ENCODE measurements at regions of chr2 and their contacts with region 1.

Region 1: GRCh38 chr2:24827321-24828237 is 34.4 kb downstream of the CENPO start:
- DNase-seq: peak; percentile 49 to 64
- H3K4me3 ChIP-seq: no peak overlapping the region
- H3K27ac ChIP-seq: no peak overlapping the region
- H3K4me1 ChIP-seq: no peaks in the 10 kb centered on the region
- H3K27me3 ChIP-seq: no peaks in the 10 kb centered on the region
- CTCF ChIP-seq: peak; percentile 92

Region 2: DNA sequence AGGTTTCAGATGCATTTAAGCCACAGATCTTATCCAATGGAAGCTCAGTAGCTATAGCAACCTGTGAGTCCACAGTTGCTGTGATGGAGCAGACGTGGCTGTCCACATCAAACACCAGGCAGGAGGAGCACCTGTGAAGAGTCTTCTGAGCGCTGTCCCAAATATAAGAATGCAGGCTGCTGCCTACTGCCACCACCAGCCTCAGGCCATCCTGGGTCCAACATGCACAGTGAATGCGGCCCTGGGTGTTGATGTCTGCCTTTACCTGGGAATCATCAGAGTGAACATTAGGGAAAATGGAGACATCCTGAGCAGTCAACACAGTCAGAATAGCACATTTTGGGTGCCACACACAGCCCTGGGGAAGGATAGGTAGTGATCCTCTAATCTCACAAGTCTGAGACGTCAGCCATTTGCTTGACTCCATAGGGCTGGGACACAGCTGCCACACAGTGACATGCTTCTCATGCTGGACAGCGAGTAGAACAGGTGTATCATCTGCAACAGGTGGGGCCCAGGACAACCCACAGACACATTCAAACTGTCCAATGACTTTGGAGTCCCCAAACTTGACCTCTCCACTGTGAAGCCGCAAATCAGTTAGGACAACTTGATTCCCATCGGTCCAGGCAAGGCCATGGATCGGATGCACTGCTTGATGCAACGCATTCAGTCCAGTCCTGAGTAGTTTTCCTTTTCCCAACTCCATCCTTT is 788.6 kb before region 1 on chr2:
- CTCF ChIA-PET with region 1: interaction called, 10 read pairs
- POLR2A ChIA-PET with region 1: no interaction called
- intact Hi-C with region 1: no loop called
- DNase-seq: no peak
- H3K4me3 ChIP-seq: no peak overlapping the region
- H3K27ac ChIP-seq: no peak overlapping the region
- H3K4me1 ChIP-seq: no peaks in the 10 kb centered on the region
- H3K27me3 ChIP-seq: no peaks in the 10 kb centered on the region
- CTCF ChIP-seq: no peak

Region 3: DNA sequence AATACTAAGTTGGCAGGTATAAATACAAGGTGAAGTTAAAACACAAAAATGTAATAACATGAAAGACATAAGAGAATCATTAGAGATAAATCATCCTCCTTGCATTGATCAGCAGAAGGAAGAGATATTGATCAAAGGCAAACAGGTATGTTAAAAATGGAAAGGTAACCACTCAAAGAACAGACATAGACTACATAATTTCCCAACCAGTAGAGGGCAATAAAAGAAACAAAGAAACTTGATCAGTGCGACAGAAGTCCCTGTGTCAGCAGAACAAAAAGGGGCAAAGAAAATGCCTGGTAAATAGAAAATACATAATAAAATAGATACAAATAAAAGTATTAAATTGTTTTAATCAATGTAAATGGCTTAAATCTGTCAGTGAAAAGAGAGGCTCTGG is 599.1 kb before region 1 on chr2:
- CTCF ChIA-PET with region 1: no interaction called
- POLR2A ChIA-PET with region 1: no interaction called
- intact Hi-C with region 1: loop called (anchors 5 kb)
- DNase-seq: peak in 1 of 2 experiments; percentile 40
- H3K4me3 ChIP-seq: no peak overlapping the region
- H3K27ac ChIP-seq: no peak overlapping the region
- H3K4me1 ChIP-seq: no peaks in the 10 kb centered on the region
- H3K27me3 ChIP-seq: no peaks in the 10 kb centered on the region
- CTCF ChIP-seq: peak; percentile 62

Region 4: GRCh38 chr2:24409700-24410556 is 417.7 kb before region 1 on chr2:
- CTCF ChIA-PET with region 1: interaction called, 7 read pairs
- POLR2A ChIA-PET with region 1: no interaction called
- intact Hi-C with region 1: loop called (anchors 1 kb)
- DNase-seq: peak; percentile 38 to 58
- H3K4me3 ChIP-seq: no peak overlapping the region
- H3K27ac ChIP-seq: no peak overlapping the region
- H3K4me1 ChIP-seq: peaks cover 11% of the 10 kb centered on the region
- H3K27me3 ChIP-seq: no peaks in the 10 kb centered on the region
- CTCF ChIP-seq: peak; percentile 92

Region 5: DNA sequence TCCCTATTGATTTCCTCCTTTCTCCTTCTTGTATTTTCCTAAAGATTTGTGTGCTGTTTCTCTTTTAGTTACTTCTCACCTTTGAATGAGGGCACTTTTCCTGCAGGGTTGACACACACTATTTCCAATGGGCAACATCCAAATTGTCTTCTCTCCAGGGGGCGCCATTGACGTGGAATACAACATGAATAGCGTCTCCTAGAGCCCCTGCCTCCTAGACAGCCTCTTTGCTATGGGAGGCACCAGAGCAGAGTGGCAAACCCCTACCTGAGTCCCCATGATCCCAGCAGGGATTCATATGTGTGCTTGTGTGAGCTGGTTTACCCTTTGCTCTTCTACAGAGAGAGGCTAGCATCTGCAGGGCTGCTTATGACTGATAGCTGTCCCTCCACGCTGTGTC is 405.9 kb before region 1 on chr2:
- CTCF ChIA-PET with region 1: interaction called, 6 read pairs
- POLR2A ChIA-PET with region 1: no interaction called
- intact Hi-C with region 1: loop called (anchors 1 kb)
- DNase-seq: peak in 1 of 2 experiments; percentile 36
- H3K4me3 ChIP-seq: no peak overlapping the region
- H3K27ac ChIP-seq: no peak overlapping the region
- H3K4me1 ChIP-seq: no peaks in the 10 kb centered on the region
- H3K27me3 ChIP-seq: no peaks in the 10 kb centered on the region
- CTCF ChIP-seq: peak; percentile 57

Region 6: DNA sequence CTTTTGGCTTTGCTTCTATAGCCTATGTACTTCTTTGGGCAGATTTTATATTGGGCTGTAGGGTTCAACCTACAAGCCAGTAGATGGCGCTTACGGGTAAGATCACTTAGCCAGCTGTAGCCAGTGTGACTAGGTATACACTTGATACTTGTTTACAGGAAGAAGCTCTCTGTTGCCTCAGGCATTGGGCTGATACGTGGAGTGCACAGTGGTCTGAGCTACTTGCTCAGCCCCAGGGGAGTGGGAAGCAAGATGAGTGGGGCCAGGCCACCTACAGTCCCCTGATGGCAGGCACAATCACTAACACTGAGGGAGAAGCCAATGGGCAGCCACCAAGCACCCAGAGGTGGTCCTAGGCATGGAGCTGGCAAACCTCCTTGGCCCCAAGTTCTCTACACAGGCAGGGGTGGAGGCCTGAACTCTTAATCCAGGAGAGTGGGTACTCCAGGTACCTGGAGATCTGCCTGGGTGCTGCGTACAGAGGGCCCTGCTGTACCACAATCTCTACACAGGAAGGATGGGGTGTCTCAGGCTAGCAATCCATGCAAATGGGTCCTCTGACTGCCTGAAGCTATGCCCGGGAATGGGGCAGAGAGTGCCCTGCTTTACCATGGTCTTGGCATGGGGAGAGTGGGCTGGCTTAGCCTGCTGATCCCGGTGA is 214.3 kb before region 1 on chr2:
- CTCF ChIA-PET with region 1: interaction called, 6 read pairs
- POLR2A ChIA-PET with region 1: no interaction called
- intact Hi-C with region 1: loop called (anchors 2 kb)
- DNase-seq: peak; percentile 7 to 42
- H3K4me3 ChIP-seq: no peak overlapping the region
- H3K27ac ChIP-seq: no peak overlapping the region
- H3K4me1 ChIP-seq: no peaks in the 10 kb centered on the region
- H3K27me3 ChIP-seq: no peaks in the 10 kb centered on the region
- CTCF ChIP-seq: peak; percentile 57

Region 7: DNA sequence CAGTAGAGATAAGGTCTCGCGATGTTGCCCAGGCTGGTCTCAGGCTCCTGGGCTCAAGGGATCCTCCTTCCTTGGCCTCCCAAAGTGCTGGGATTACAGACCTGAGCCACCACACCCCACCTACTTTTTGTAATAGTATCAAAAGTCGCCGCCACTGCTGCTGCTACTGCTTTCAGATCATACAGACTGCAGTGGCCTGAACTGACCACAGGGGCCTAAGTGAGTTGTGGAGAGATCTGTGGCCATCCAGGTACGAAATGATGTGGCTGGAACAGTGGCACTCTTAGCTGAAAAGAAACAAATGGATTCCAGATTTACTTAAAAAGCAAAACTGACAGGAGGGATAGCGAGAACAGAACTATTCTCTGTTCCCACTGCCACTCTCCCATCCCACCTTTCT is 373.7 kb after region 1 on chr2:
- CTCF ChIA-PET with region 1: no interaction called
- POLR2A ChIA-PET with region 1: no interaction called
- intact Hi-C with region 1: loop called (anchors 5 kb)
- DNase-seq: no peak
- H3K4me3 ChIP-seq: no peak overlapping the region
- H3K27ac ChIP-seq: no peak overlapping the region
- H3K4me1 ChIP-seq: no peaks in the 10 kb centered on the region
- H3K27me3 ChIP-seq: no peaks in the 10 kb centered on the region
- CTCF ChIP-seq: peak; percentile 46